CD4-positive, alpha-beta T cell (primary cell): ENCODE measurements at regions of chr1 and their contacts with region 1.

Region 1: DNA sequence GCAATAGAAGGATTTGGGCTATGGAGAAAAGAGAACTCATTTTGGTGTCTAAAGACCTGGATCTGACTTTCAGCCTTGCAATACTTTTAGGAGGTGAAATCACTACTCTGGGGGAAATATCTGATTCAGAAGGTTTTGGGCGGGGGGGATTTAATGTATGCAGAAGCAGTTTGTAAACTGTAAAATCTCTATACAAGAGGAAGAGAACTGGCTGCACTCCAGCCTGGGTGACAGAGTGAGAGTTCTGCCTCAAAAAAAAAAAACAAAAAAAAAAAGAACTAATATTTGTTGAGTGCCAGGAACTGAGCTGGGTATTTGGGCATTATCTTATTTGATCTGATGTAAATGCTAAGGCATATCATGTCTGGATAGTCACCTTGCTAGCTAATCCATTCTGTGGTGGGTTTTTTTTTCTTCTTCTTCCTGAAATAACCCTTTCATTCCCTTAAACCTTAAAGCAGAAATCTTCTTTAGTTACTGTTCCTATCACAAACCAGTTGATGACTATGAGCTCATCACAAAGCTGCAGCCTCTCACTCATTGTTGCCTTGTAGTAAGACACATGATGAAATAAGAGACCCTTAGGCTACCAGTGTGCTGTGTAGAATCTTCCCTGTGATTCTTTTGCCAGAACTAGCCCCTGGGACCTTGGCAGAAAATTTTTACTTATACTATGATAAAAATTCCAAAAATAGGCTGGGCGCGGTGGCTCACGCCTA is 35.6 kb upstream of the SLC16A1 start:
- DNase-seq: no peak
- ATAC-seq: no peak
- H3K4me3 ChIP-seq: no peak overlapping the region
- H3K4me3 Mint-ChIP-seq: no peak overlapping the region
- H3K27ac ChIP-seq: no peak overlapping the region
- H3K27ac Mint-ChIP-seq: no peak overlapping the region
- H3K4me1 ChIP-seq: no peaks in the 10 kb centered on the region
- H3K4me1 Mint-ChIP-seq: no peaks in the 10 kb centered on the region
- H3K27me3 ChIP-seq: no peaks in the 10 kb centered on the region
- H3K27me3 Mint-ChIP-seq: no peaks in the 10 kb centered on the region
- CTCF ChIP-seq: no peak

Region 2: DNA sequence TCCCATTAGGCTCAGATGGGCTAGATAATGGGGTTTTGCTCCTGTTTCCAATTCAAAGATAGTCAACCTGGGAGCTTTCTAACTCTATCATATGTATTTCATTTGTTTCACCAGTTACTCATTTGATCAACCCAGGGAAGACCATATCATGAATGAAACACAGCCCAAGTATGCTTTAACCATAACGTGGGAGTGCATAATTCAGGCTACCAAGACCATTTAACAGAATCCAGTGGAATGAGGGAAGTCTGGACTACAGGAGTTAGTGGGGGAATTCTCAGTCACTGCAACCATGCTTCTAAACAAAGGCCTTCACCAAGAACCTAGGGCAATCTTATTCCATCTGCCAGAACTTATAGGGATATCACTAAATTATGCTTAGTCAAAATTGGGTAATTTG is 20.6 kb before region 1 on chr1:
- CTCF ChIA-PET with region 1: no interaction called
- POLR2A ChIA-PET with region 1: no interaction called
- intact Hi-C with region 1: loop called in 1 of 2 experiments (anchors 1 kb)
- DNase-seq: no peak
- ATAC-seq: no peak
- H3K4me3 ChIP-seq: no peak overlapping the region
- H3K4me3 Mint-ChIP-seq: no peak overlapping the region
- H3K27ac ChIP-seq: no peak overlapping the region
- H3K27ac Mint-ChIP-seq: no peak overlapping the region
- H3K4me1 ChIP-seq: no peaks in the 10 kb centered on the region
- H3K4me1 Mint-ChIP-seq: peaks cover 4% of the 10 kb centered on the region
- H3K27me3 ChIP-seq: no peaks in the 10 kb centered on the region
- H3K27me3 Mint-ChIP-seq: no peaks in the 10 kb centered on the region
- CTCF ChIP-seq: no peak